GM12878 (cell line): ENCODE measurements at regions of chr12 and their contacts with region 1.

Region 1: GRCh38 chr12:32455607-32456071 is 56.3 kb downstream of the FGD4 start:
- DNase-seq: no peak
- ATAC-seq: peak; percentile 48; the same call in 2 of the 3 replicates
- H3K4me3 ChIP-seq: no peak overlapping the region
- H3K27ac ChIP-seq: no peak overlapping the region
- H3K4me1 ChIP-seq: no peaks in the 10 kb centered on the region; the same call in 1 of the 2 replicates
- H3K27me3 ChIP-seq: no peaks in the 10 kb centered on the region
- CTCF ChIP-seq: peak; percentile 46 to 70 (median 49); a peak in 5 of 6 replicates
- EP300 ChIP-seq: no peak
- POLR2A ChIP-seq: no peak
- RAD21 ChIP-seq: peak; percentile 82

Region 2: DNA sequence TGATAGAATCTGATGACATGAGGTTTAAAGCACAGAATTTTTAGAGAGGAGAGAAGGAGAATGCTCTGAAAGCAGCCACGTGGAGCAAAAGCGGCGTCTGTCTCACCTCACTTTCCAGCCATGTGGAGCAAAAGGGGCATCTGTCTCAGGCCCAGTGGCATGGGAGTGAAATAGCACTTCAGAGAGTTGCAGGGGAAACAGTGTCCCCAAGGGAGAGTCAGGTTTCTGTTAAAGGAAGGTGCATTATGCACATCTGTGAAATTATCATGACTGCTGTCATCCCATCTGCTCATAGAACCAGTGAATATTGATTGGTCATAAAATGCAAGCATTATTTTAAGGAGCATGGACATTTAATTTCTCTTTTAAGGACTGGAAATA is 225.0 kb before region 1 on chr12:
- CTCF ChIA-PET with region 1: no interaction called
- POLR2A ChIA-PET with region 1: no interaction called
- RAD21 ChIA-PET with region 1: no interaction called
- SMC1A ChIA-PET with region 1: no interaction called
- in situ Hi-C with region 1: no loop called
- intact Hi-C with region 1: no loop called
- DNase-seq: no peak
- ATAC-seq: peak; percentile 33; the same call in 1 of the 3 replicates
- H3K4me3 ChIP-seq: no peak overlapping the region
- H3K27ac ChIP-seq: no peak overlapping the region
- H3K4me1 ChIP-seq: no peaks in the 10 kb centered on the region
- H3K27me3 ChIP-seq: no peaks in the 10 kb centered on the region
- CTCF ChIP-seq: no peak
- EP300 ChIP-seq: no peak
- POLR2A ChIP-seq: no peak
- RAD21 ChIP-seq: no peak

Region 3: GRCh38 chr12:32365473-32366064 is 90.1 kb before region 1 on chr12:
- CTCF ChIA-PET with region 1: interaction called, 6 read pairs
- POLR2A ChIA-PET with region 1: no interaction called
- RAD21 ChIA-PET with region 1: interaction called, 5 read pairs
- SMC1A ChIA-PET with region 1: interaction called, 11 read pairs
- in situ Hi-C with region 1: no loop called
- intact Hi-C with region 1: no loop called
- DNase-seq: peak; percentile 8
- ATAC-seq: peak; percentile 86
- H3K4me3 ChIP-seq: no peak overlapping the region
- H3K27ac ChIP-seq: no peak overlapping the region
- H3K4me1 ChIP-seq: no peaks in the 10 kb centered on the region
- H3K27me3 ChIP-seq: no peaks in the 10 kb centered on the region
- CTCF ChIP-seq: peak; percentile 67 to 83 (median 67)
- EP300 ChIP-seq: no peak
- POLR2A ChIP-seq: no peak
- RAD21 ChIP-seq: peak; percentile 85

Region 4: GRCh38 chr12:32659908-32660440 is 204.3 kb after region 1 on chr12:
- CTCF ChIA-PET with region 1: interaction called, 35 read pairs
- POLR2A ChIA-PET with region 1: no interaction called
- RAD21 ChIA-PET with region 1: interaction called, 20 read pairs
- SMC1A ChIA-PET with region 1: interaction called, 16 read pairs
- in situ Hi-C with region 1: no loop called
- intact Hi-C with region 1: loop called (anchors 5 kb)
- DNase-seq: no peak
- ATAC-seq: peak; percentile 37; the same call in 2 of the 3 replicates
- H3K4me3 ChIP-seq: no peak overlapping the region
- H3K27ac ChIP-seq: no peak overlapping the region
- H3K4me1 ChIP-seq: no peaks in the 10 kb centered on the region
- H3K27me3 ChIP-seq: no peaks in the 10 kb centered on the region
- CTCF ChIP-seq: no peak
- EP300 ChIP-seq: no peak
- POLR2A ChIP-seq: no peak
- RAD21 ChIP-seq: no peak

Region 5: DNA sequence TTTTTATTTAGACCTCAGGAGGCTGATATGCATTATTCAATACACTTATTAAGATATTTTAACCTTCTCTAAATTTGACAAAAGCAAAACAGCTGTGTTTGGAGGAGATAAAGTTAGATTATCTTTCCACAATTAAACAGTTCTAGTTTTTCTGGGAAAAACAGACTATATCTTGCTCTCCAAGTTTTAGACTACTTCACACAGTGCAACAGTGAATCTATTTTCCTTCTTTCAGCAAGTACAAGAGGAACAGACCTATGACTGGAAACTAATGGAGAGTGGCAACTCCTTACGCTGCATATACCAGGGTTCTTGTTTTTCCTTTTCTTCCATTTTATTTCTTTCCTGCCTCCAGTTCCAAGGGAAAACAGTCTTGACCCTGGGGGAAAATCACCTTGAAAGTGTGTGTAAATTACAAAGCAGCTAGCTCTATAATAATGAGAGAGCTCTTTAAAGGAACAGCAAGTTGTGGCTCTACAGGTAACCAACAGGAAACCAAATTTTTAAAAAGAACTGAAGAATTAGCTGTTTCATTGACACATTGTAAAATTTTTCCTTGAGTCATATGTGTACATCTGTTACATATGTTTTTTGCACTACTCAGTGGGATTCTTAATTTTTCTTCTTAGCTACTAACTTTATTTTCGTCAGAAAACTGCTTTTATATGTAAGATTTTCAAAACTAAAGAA is 250.8 kb after region 1 on chr12:
- CTCF ChIA-PET with region 1: interaction called, 4 read pairs
- POLR2A ChIA-PET with region 1: no interaction called
- RAD21 ChIA-PET with region 1: interaction called, 3 read pairs
- SMC1A ChIA-PET with region 1: interaction called, 10 read pairs
- in situ Hi-C with region 1: no loop called
- intact Hi-C with region 1: no loop called
- DNase-seq: no peak
- ATAC-seq: no peak
- H3K4me3 ChIP-seq: no peak overlapping the region
- H3K27ac ChIP-seq: no peak overlapping the region
- H3K4me1 ChIP-seq: no peaks in the 10 kb centered on the region
- H3K27me3 ChIP-seq: no peaks in the 10 kb centered on the region
- CTCF ChIP-seq: no peak
- EP300 ChIP-seq: no peak
- POLR2A ChIP-seq: no peak
- RAD21 ChIP-seq: no peak

Region 6: DNA sequence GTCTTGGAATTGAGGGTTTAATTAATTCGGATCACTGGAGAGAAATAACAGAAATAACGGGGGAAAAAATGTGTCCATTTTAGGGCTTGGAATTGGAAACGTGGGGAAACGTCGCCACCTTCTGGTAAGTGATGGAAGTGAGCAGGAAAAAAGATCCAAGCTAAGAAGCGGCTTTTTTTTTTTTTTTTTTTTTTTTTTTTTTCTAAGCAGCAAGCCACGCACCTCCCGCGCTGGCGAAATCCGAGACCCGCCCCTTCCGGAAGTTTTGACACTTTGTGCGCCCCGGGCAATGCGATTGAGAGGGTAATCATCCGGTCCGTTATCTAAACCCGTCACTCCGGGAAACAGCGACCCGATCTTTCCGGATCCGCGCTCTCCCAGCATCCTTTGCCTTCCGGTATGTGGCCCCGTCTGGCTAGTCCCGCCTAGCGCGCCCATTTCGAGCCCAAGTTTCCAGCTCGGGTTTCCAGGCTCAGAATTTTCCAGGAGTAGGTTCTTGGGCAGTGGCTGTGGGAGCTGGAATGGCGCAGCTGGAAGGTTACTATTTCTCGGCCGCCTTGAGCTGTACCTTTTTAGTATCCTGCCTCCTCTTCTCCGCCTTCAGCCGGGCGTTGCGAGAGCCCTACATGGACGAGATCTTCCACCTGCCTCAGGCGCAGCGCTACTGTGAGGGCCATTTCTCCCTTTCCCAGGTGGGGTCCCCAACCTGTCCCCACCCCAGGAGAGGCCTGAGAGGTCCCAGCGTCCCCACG is 1566.6 kb after region 1 on chr12 and contains the start of gene ALG10:
- CTCF ChIA-PET with region 1: interaction called, 3 read pairs
- POLR2A ChIA-PET with region 1: no interaction called
- RAD21 ChIA-PET with region 1: interaction called, 7 read pairs
- SMC1A ChIA-PET with region 1: interaction called, 3 read pairs
- in situ Hi-C with region 1: loop called (anchors 10 kb)
- intact Hi-C with region 1: loop called (anchors 5 kb)
- DNase-seq: peak; percentile 83
- ATAC-seq: peak; percentile 100
- H3K4me3 ChIP-seq: peak within 1 kb of the TSS; percentile 88
- H3K27ac ChIP-seq: peak within 1 kb of the TSS; percentile 78
- H3K4me1 ChIP-seq: no peaks in the 10 kb centered on the region
- H3K27me3 ChIP-seq: no peaks in the 10 kb centered on the region
- CTCF ChIP-seq: peak; percentile 55 to 60 (median 59)
- EP300 ChIP-seq: no peak
- POLR2A ChIP-seq: peak; percentile 81
- RAD21 ChIP-seq: peak; percentile 74
- polyA plus RNA-seq, gene ALG10: 3.1 to 4.6 TPM